Ascending aorta (tissue), 2 donors: ENCODE measurements at regions of chr14 and their contacts with region 1.

Region 1: DNA sequence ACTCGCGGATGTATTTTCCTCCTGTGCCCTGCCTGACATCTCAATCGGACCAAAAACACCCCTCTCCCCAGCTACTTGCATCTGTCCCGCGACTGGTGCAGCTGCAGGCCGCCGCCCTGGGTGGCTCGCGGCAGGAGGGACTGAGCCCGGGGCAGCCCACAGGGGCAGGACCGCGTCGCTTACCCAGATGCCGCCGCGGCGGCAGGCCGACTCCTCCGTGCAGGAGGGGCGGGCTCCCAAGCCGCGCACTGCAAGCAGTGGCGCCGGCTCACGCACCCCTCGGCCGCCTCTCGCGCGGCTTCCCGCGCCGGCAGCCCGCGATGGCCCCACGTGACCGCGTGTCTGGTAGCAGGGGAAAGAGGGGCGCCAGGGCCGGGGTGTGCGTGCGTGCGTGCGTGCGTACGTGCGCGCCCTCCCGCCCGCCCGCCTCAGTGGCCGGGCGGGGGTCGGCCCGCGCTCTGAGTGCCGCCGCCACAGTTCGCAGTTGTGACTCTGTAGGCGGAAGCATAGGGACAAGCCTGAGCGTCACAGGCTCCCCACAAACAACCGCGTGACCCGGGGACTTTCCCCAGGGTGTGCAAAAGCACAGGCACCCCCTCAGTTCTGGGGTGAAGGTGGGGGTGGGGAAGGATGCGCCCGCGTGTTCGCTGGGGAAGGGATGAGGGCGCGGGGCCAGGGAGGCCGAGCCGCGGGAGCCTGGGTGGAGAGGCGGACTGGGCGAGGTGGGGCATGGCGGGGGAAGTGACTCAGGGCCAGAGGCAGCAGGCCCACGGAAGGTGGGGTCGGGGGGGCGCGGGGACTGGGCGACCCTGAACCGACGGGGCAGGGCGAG is at the start of gene ZBTB25:
- DNase-seq: peak; percentile 86 to 96
- H3K4me3 ChIP-seq: peak within 1 kb of the TSS; percentile 91 to 94
- H3K27ac ChIP-seq: peak within 1 kb of the TSS; percentile 99
- H3K4me1 ChIP-seq: peaks cover 13 to 44% of the 10 kb centered on the region in 2 donors
- H3K27me3 ChIP-seq: no peaks in the 10 kb centered on the region
- CTCF ChIP-seq: no peak
- total RNA-seq, gene ZBTB25: 2.9 TPM

Region 2: DNA sequence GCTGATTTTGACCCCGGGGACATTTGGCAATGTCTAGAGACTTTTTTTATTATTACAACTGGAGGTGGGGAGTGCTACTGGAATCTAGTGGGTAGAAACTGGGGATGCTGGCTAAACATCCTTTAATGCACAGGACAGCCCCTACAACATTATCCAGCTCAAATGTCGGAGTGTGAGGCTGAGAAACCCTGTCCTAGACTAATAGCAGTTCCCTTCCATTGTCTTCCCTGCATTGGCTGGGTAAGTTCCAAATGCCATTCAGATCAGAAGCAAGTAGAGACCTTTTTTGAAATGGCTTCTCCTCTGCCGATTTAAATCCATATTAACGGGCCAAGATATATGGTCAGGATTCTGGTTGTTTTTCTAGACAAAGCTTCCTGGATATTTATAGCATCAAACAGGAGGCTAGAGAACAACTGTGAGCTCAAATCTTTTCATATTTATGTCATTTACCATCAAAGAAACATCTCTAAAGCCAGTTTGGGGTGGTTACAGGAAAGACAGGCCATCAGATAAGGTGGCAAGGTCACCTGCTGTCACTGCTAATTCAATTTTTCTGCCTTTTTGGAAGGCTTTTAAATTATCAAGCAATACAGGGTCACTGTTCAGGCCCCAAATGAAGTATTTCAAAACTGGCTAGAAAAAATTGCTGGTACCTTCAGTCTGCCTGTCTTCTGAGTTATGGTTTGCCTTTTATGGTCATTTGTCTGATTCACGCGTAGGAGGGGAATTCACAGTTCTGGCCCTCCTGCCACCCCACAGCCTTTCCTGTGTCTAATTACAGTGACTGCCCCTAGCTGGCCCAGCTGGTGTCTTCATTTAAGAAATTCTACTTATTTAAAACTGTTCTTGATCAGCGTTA is 58.5 kb before region 1 on chr14:
- intact Hi-C with region 1: loop called (anchors 2 kb)
- DNase-seq: peak in 1 of 2 donors; percentile 78
- H3K4me3 ChIP-seq: no peak overlapping the region
- H3K27ac ChIP-seq: peak overlapping the region; percentile 85
- H3K4me1 ChIP-seq: peaks cover 4 to 25% of the 10 kb centered on the region in 2 donors
- H3K27me3 ChIP-seq: no peaks in the 10 kb centered on the region
- CTCF ChIP-seq: no peak

Region 3: DNA sequence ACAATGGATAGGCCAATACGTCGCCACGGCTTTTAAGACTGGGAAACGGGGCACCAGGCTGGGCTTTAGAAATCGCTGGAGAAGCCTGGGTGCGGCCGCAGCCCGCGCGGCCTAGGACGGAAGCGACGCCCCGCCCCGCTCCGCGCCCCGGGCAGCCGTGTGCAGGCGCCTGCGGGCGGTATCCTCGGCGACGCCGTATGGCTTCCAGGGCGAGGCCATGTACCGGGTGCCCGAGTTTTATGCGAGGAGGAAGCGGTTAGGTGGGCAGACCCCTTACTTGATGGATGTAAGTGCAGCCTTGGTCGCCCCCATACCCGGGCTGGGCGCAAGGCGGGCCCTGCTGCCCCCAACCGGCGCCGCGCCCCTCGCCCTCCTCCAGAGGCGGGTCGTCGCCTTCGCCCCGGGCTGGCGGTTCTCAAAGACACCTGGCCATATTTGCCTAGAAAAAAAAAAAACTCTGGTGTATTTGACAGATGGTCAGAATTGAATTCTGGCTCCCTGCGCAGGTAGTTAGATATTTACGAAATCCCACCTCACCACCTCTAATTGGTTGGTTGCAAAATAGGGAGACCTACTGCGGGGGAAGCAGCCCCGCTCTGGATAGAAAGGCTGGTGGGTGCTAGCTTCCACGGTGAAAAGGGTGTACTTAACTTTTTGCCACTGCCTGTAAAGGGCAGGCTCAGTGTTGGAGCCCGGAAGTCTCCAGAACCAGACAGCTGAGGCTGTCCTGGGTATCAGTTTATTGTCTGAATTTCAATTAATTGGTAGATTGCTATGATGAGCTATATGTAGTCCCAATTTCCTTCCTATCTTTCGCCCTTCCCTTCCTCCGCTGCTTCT is 46.3 kb after region 1 on chr14 and contains the start of gene PPP1R36:
- intact Hi-C with region 1: no loop called
- DNase-seq: no peak
- H3K4me3 ChIP-seq: peak within 1 kb of the TSS; percentile 9 to 56
- H3K27ac ChIP-seq: no peak within 1 kb of the TSS
- H3K4me1 ChIP-seq: peaks cover 0 to 9% of the 10 kb centered on the region in 2 donors
- H3K27me3 ChIP-seq: no peaks in the 10 kb centered on the region
- CTCF ChIP-seq: no peak
- total RNA-seq, gene PPP1R36: not detected

Region 4: GRCh38 chr14:64566651-64567122 is 63.0 kb after region 1 on chr14:
- intact Hi-C with region 1: no loop called
- DNase-seq: no peak
- H3K4me3 ChIP-seq: no peak overlapping the region
- H3K27ac ChIP-seq: peak overlapping the region; percentile 73 to 76
- H3K4me1 ChIP-seq: peaks cover 3 to 33% of the 10 kb centered on the region in 2 donors
- H3K27me3 ChIP-seq: no peaks in the 10 kb centered on the region
- CTCF ChIP-seq: no peak